Activated CD4-positive, alpha-beta T cell treated with anti-CD3 and anti-CD28 coated beads for 36 hours (primary cell): ENCODE measurements at regions of chr1 and their contacts with region 1.

Region 1: GRCh38 chr1:40338745-40339424 is 21.8 kb upstream of the COL9A2 start:
- DNase-seq: peak; percentile 94
- ATAC-seq: peak; percentile 85
- H3K4me3 Mint-ChIP-seq: peak overlapping the region; percentile 14
- H3K27ac Mint-ChIP-seq: peak overlapping the region; percentile 69
- H3K4me1 Mint-ChIP-seq: peaks cover 42% of the 10 kb centered on the region
- H3K27me3 Mint-ChIP-seq: no peaks in the 10 kb centered on the region

Region 2: GRCh38 chr1:40078512-40079333 is 260.2 kb before region 1 on chr1:
- CTCF ChIA-PET with region 1: interaction called, 37 read pairs
- POLR2A ChIA-PET with region 1: interaction called, 3 read pairs
- intact Hi-C with region 1: loop called (anchors 1 kb)
- DNase-seq: peak; percentile 61
- ATAC-seq: peak; percentile 82
- H3K4me3 Mint-ChIP-seq: no peak overlapping the region
- H3K27ac Mint-ChIP-seq: peak overlapping the region; percentile 70
- H3K4me1 Mint-ChIP-seq: peaks cover 13% of the 10 kb centered on the region
- H3K27me3 Mint-ChIP-seq: no peaks in the 10 kb centered on the region

Region 3: DNA sequence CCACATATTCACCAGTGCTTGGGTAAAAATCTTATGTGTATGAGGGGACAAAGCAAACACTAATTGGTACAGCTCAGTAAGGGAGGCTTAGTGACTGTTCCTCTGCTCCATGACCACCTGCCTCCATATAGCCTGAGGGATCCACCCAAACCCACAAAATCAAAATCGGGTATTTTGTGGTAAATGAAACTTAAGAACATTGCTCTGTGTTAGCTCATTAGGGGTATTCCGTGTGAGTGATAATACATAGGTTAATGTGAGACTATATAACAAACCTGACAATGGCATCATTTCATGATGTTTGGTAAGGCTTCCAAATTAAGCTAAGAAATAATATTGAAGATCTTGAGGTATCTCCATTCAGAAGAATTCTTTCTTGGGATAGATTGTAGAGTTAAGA is 47.6 kb before region 1 on chr1:
- CTCF ChIA-PET with region 1: interaction called, 12 read pairs
- POLR2A ChIA-PET with region 1: no interaction called
- intact Hi-C with region 1: no loop called
- DNase-seq: no peak
- ATAC-seq: no peak
- H3K4me3 Mint-ChIP-seq: no peak overlapping the region
- H3K27ac Mint-ChIP-seq: peak overlapping the region; percentile 35
- H3K4me1 Mint-ChIP-seq: no peaks in the 10 kb centered on the region
- H3K27me3 Mint-ChIP-seq: no peaks in the 10 kb centered on the region

Region 4: DNA sequence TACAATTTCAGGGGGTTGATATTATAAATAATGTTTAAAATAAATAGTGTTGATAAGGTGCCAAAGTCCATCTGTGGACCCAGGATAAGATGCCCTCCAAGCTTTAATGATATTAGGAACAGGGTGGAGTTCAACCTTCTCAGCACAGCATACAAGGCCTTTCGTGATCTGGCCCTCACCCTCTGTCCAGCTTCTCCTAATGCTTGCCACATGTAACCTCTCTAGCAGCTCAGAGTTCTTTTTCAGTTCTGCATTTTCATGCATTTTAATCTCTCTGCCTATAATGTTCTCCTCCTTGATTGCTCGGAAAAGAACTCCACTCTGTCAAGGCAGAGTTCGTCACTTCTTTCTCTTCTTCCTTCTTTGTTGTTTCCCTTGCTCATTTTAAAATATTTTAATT is 13.2 kb after region 1 on chr1:
- CTCF ChIA-PET with region 1: interaction called, 38 read pairs
- POLR2A ChIA-PET with region 1: no interaction called
- intact Hi-C with region 1: no loop called
- DNase-seq: no peak
- ATAC-seq: no peak
- H3K4me3 Mint-ChIP-seq: no peak overlapping the region
- H3K27ac Mint-ChIP-seq: no peak overlapping the region
- H3K4me1 Mint-ChIP-seq: no peaks in the 10 kb centered on the region
- H3K27me3 Mint-ChIP-seq: no peaks in the 10 kb centered on the region

Region 5: GRCh38 chr1:40373338-40374283 is 34.7 kb after region 1 on chr1 and contains the start of gene SMAP2:
- CTCF ChIA-PET with region 1: interaction called, 17 read pairs
- POLR2A ChIA-PET with region 1: interaction called, 3 read pairs
- intact Hi-C with region 1: no loop called
- DNase-seq: peak; percentile 98
- ATAC-seq: peak; percentile 85
- H3K4me3 Mint-ChIP-seq: peak within 1 kb of the TSS; percentile 100
- H3K27ac Mint-ChIP-seq: peak within 1 kb of the TSS; percentile 99
- H3K4me1 Mint-ChIP-seq: peaks cover 44% of the 10 kb centered on the region
- H3K27me3 Mint-ChIP-seq: no peaks in the 10 kb centered on the region
- total RNA-seq, gene SMAP2: 241 to 258 TPM

Region 6: GRCh38 chr1:40476924-40477677 is 138.2 kb after region 1 on chr1 and contains the start of gene ZFP69:
- CTCF ChIA-PET with region 1: no interaction called
- POLR2A ChIA-PET with region 1: no interaction called
- intact Hi-C with region 1: no loop called
- DNase-seq: peak; percentile 81
- ATAC-seq: peak; percentile 84
- H3K4me3 Mint-ChIP-seq: peak within 1 kb of the TSS; percentile 80
- H3K27ac Mint-ChIP-seq: peak within 1 kb of the TSS; percentile 81
- H3K4me1 Mint-ChIP-seq: peaks cover 21% of the 10 kb centered on the region
- H3K27me3 Mint-ChIP-seq: no peaks in the 10 kb centered on the region
- total RNA-seq, gene ZFP69: 4.6 to 5.4 TPM